Posterior vena cava (tissue), 2 donors: ENCODE measurements at regions of chr4 and their contacts with region 1.

Region 1: DNA sequence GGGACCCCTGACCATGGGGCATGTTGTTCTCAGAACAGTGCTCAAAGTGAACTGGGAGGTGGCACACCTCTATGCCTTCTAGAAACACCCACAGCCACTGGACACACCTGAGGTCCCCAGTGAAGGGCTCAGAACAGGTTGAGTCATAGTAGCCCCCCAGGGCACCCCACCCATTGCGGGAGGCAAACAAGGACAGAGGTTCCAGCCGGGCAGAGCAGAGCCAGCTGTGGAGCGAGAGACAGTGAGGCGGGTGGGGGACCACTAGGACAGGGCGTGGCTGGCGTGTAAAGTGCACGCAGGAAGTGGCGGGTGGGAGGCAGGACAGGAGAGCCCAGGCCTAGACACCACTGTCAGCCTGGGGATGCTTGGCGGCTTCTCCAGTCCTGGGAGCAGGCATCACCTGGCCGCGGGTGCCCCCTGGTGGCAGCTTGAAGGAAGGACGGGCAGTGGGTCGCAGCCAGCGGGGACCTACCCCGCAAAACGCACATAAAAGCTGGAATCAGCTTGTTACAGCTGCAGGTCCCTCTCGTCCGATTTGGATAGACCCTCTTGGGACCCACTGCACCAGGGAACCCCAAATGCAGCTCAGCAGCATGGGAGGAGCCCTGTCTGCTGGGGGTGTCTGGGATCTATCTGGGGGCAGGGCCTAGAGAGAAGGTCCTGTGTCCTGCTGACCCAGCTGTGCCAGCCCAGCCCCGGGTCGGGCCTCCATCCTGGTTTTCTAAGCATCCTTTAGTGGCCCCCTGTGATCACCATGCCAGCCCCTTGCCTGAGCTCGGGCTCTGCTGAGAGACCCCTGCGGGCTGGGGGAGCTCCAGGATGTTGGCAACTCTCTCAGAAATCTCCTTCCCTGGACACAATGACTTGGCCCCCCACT is 57.6 kb downstream of the WFS1 start:
- DNase-seq: peak; percentile 94

Region 2: GRCh38 chr4:5069901-5070300 is 1257.4 kb before region 1 on chr4:
- intact Hi-C with region 1: no loop called
- DNase-seq: no peak

Region 3: DNA sequence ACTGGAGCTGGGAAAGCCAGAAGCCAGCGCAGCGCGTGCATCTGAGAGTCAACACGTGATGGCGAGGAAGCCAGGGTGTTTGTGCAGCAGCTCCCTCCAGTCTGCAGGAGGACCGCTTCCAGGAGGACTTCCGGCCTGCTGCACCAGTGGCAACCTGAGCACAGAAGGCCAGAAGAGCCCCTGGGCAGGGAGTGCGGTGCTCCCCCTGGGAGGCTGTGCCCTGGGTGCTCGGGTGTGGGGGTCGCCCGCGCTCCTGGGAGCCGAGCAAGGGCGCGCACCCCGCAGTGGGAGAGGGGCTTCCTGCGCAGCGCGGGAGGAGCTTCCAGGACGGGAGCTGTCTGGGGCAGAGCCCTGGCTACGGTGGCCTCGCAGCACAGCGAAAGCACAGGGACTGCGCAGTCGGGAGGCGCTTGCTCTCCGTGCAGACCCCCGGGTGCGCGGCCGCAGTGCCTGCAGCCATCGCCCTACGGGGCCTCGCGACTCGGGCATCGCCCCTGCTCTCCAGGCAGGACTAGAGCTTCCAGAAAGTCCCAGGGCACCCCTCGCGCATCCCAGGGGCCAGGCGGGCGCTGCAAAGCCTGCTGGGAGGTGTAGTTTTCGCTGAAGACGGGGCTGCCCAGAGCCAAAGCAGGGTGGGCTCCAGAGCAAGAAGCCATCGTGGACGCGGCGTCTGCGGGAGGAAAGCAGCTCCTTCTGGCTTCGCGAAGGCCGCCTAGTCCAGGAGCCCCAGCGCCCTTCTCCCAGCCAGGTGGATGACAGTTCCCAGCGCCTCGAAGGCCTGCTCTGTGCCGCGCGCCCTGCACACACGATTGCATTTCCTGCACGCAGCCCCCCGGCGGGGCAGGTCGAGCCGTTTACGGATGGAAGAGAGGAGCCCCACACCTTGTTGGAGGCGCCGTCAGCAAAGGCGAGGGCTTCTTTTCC is 81.8 kb before region 1 on chr4:
- intact Hi-C with region 1: loop called in 1 of 2 experiments (anchors 5 kb)
- DNase-seq: peak; percentile 72

Region 4: GRCh38 chr4:6252051-6252450 is 75.2 kb before region 1 on chr4:
- intact Hi-C with region 1: loop called (anchors 2 kb)
- DNase-seq: peak; percentile 68

Region 5: DNA sequence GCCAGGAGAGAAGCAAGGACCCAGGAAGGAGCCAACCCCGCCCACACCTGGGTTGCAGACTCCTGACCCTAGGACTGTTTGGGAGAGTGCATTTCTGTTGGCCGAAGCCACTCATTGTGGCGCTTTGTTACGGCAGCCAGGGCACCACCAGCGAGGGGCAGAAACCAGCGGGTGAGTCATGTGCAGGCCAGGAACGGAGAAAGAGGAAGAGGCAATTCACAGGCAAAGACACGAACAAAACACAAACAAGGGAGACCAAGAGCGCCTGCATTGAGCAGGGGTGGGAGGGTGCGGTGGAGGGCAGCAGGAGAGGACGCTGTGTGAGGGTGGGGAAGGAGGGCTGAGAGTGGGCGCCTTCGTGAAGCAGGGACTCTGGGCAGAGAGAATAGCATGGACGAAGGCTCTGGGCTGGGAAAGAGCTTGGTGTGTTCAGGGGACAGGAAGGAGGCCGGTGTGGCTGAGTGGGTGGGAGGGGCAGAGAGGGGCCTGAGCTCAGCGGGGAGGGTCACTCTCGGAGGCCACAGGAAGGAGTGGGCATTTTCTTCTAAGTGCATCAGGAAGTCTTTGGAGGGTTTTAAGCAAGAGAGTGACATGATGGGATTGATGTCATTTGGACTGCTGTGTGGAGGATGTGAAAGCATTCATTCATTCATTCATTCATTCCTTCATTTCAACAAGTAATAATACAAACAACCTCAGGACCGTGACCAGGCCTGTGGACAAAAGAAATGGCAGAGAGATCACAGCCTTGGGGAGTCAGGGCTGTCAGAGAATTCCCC is 69.8 kb before region 1 on chr4:
- intact Hi-C with region 1: loop called (anchors 2 kb)
- DNase-seq: peak; percentile 78

Region 6: GRCh38 chr4:6546681-6547447 is 219.6 kb after region 1 on chr4:
- intact Hi-C with region 1: loop called in 1 of 2 experiments (anchors 5 kb)
- DNase-seq: no peak